ENCODE measurements at regions of chr11 and their contacts with region 1.

Region 1: DNA sequence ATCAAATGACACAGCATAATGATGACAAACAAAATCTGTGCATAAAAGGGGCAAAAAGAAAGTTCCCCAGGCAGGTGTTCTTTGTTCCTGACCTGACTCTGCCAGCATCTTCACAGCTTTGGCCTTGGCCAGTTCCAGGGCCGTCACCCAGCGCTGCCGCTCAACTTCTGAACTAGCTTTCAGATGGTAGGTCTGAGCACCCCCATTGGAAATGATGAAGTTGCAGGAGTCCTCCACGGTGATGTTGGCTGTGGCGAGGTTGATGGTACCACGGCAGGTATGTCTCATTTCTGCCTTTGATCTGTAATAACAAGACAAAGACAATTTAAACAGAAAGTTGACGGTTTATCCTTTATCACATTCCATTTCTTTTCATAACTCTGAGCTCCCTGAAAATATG is 5.3 kb downstream of the OSBP start:
- DNase-seq: no peak

Region 2: GRCh38 chr11:59625703-59626102 is 15.4 kb after region 1 on chr11:
- intact Hi-C with region 1: loop called in 1 of 2 experiments (anchors 1 kb)
- DNase-seq: no peak

Region 3: GRCh38 chr11:59776210-59777066 is 166.1 kb after region 1 on chr11:
- intact Hi-C with region 1: no loop called
- DNase-seq: no peak

Measured in posterior vena cava (tissue), 2 donors.